ENCODE measurements at regions of chr7 and their contacts with region 1.

Region 1: DNA sequence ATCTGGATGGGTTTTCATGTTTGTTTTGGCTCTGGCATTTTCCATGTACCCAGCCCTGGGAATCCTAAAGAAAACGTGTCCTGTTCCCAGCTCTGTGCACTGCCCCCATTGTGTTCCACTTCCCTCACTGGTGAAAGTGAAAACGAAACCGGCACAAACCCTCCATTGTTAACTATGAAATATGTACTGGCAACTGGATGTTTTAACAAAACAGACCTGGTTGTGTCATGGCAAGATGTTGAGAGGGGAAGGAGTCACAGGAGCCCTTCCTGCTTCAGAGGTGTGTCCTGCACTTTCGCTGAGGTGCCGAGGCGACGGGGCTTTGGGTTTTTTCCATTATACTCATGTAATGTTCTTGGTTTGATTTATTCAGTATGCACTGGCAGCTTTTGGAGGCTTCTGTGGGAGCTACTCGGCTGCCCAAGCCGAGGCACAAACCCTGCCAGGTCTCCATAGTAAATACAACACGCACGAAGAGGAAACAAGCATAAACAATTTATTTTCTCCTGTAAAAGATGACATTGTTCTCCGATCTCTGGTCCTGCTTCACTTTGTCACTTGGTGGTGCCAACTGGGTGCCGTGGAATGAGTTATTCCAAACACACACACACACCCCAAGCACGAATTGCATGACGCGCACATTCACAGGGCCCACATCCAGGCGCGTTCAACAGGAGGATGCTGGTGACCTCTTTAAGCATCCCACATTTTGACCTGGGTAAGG is 118.2 kb downstream of the CDK6 start:
- DNase-seq: peak in 8 of 9 donors; percentile 45 to 73 (median 62)
- ATAC-seq: peak; percentile 91
- H3K4me3 ChIP-seq: peak overlapping the region; percentile 62
- H3K4me3 Mint-ChIP-seq: peak overlapping the region; percentile 84 to 96 (median 94)
- H3K27ac ChIP-seq: peak overlapping the region; percentile 49
- H3K27ac Mint-ChIP-seq: peak overlapping the region; percentile 88 to 99 (median 96)
- H3K4me1 ChIP-seq: peaks cover 10 to 14% of the 10 kb centered on the region in 2 donors
- H3K4me1 Mint-ChIP-seq: peaks cover 26 to 73% (median 40%) of the 10 kb centered on the region in 7 donors
- H3K27me3 ChIP-seq: no peaks in the 10 kb centered on the region
- H3K27me3 Mint-ChIP-seq: no peaks in the 10 kb centered on the region

Region 2: GRCh38 chr7:92020636-92021035 is 697.5 kb before region 1 on chr7:
- CTCF ChIA-PET with region 1: no interaction called
- POLR2A ChIA-PET with region 1: no interaction called
- intact Hi-C with region 1: no loop called
- DNase-seq: no peak
- ATAC-seq: no peak
- H3K4me3 ChIP-seq: no peak overlapping the region
- H3K4me3 Mint-ChIP-seq: no peak overlapping the region
- H3K27ac ChIP-seq: no peak overlapping the region
- H3K27ac Mint-ChIP-seq: peak overlapping the region in 3 of 9 donors; percentile 27 to 37 (median 32)
- H3K4me1 ChIP-seq: no peaks in the 10 kb centered on the region
- H3K4me1 Mint-ChIP-seq: peaks cover 0 to 3% (median 0%) of the 10 kb centered on the region in 7 donors
- H3K27me3 ChIP-seq: no peaks in the 10 kb centered on the region
- H3K27me3 Mint-ChIP-seq: no peaks in the 10 kb centered on the region

Region 3: DNA sequence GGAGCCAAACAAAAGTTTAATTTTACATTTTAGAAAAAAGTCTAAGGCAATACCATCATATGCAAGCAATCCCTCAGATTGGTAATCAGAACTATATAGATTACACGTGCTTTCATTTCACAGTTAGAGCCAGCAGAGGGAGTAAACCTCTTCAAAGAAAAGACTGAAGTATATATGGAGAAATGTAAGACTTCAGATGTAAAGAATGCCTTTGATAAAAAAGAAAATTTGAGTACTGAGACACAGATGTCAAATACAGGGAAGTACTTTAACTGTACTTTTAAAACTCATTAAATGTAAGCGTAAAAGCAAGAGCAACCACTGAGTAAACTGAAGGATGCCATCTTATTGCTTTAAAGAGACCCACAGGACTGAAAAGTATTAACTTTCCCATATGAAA is 26.6 kb before region 1 on chr7:
- CTCF ChIA-PET with region 1: interaction called, 3 read pairs
- POLR2A ChIA-PET with region 1: no interaction called
- intact Hi-C with region 1: loop called (anchors 1 to 2 kb)
- DNase-seq: peak in 7 of 9 donors; percentile 33 to 59 (median 41)
- ATAC-seq: peak; percentile 93
- H3K4me3 ChIP-seq: no peak overlapping the region
- H3K4me3 Mint-ChIP-seq: peak overlapping the region in 4 of 10 donors; percentile 18 to 50 (median 20)
- H3K27ac ChIP-seq: no peak overlapping the region
- H3K27ac Mint-ChIP-seq: peak overlapping the region in 8 of 9 donors; percentile 1 to 75 (median 58)
- H3K4me1 ChIP-seq: peaks cover 12 to 15% of the 10 kb centered on the region in 2 donors
- H3K4me1 Mint-ChIP-seq: peaks cover 7 to 74% (median 38%) of the 10 kb centered on the region in 7 donors
- H3K27me3 ChIP-seq: no peaks in the 10 kb centered on the region
- H3K27me3 Mint-ChIP-seq: no peaks in the 10 kb centered on the region

Region 4: DNA sequence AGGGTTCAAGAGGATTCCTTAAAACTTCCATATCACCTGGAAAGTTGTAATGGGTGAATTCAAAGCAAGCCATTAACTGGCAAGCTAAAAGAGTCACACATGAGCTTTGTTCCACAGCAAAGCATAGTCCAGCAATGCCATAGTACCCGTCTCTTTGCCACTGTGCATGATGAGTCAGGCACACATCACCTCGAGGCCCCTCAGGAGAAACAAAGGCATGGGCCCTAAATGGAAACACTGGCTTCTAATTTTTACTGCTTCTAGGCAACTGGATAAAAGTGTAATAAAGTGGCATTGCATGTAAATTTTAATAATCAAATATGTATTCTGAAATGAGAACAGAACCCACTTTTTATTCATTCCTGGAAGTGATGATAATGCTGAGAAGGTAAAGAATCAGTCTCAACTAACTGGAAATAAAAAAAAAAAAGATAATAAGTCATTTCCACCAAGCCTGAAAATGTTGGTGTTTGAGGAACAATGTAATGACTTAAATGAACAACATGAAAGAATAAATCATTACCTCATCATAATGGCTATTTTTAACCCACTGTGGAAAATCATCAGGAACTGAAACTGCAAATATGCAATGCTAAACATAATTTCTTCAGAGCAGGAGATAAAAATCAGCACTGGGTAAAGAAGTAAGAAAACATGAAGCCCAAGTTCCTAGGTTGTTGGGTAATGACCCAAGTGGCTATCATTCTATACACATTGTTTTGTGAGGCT is 13.3 kb after region 1 on chr7:
- CTCF ChIA-PET with region 1: no interaction called
- POLR2A ChIA-PET with region 1: no interaction called
- intact Hi-C with region 1: loop called in 1 of 2 experiments (anchors 2 kb)
- DNase-seq: peak in 1 of 9 donors; percentile 35
- ATAC-seq: peak; percentile 63
- H3K4me3 ChIP-seq: no peak overlapping the region
- H3K4me3 Mint-ChIP-seq: peak overlapping the region in 1 of 10 donors; percentile 59
- H3K27ac ChIP-seq: no peak overlapping the region
- H3K27ac Mint-ChIP-seq: peak overlapping the region in 1 of 9 donors; percentile 67
- H3K4me1 ChIP-seq: no peaks in the 10 kb centered on the region
- H3K4me1 Mint-ChIP-seq: peaks cover 16 to 60% (median 27%) of the 10 kb centered on the region in 7 donors
- H3K27me3 ChIP-seq: no peaks in the 10 kb centered on the region
- H3K27me3 Mint-ChIP-seq: no peaks in the 10 kb centered on the region

Region 5: GRCh38 chr7:92809397-92810241 is 91.5 kb after region 1 on chr7:
- CTCF ChIA-PET with region 1: no interaction called
- POLR2A ChIA-PET with region 1: no interaction called
- intact Hi-C with region 1: loop called in 1 of 2 experiments (anchors 1 kb)
- DNase-seq: peak in 7 of 9 donors; percentile 27 to 49 (median 41)
- ATAC-seq: peak; percentile 82
- H3K4me3 ChIP-seq: peak overlapping the region; percentile 11
- H3K4me3 Mint-ChIP-seq: peak overlapping the region in 9 of 10 donors; percentile 2 to 70 (median 41)
- H3K27ac ChIP-seq: no peak overlapping the region
- H3K27ac Mint-ChIP-seq: peak overlapping the region in 4 of 9 donors; percentile 27 to 92 (median 55)
- H3K4me1 ChIP-seq: peaks cover 18 to 30% of the 10 kb centered on the region in 2 donors
- H3K4me1 Mint-ChIP-seq: peaks cover 29 to 79% (median 42%) of the 10 kb centered on the region in 7 donors
- H3K27me3 ChIP-seq: no peaks in the 10 kb centered on the region
- H3K27me3 Mint-ChIP-seq: no peaks in the 10 kb centered on the region

Region 6: DNA sequence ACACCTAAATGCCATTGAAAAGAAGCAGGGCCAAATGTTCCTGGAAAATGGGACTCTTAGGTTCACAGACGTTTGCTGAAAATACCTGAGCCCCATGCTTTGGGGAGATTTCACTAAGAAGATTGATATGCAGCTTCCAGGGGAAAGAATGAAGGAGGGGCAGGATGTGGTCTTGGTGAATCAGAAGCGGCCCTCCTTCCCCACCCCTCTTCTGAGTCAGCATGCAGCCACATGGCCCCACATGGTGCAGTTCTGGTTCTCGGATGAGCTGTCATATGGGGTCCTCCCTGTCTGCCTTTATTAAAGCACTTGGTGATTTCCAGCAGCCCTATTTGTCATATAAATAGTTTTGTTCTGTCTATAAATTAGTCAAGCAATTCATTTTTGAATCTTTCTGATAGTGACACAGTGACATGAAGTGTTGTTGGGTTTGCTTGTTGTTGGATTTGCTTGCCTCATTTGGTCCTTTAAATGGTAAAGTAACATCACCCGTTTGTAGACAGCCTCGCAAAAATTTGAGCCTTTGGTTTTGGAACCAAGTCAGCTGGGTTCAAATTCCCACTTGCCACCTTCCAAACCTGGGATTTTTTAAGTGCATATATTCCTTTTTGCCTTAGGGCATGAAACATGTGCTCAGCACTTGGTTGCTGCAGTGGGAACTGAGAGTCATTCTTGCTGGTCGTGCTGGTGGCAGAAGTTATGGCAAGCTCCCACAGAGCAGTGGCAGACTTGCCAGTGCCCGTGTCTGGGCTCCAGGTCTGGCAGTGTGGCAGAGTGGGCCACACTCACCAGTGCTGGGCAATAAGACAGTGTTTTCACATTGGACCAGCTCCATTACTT is 186.4 kb after region 1 on chr7:
- CTCF ChIA-PET with region 1: no interaction called
- POLR2A ChIA-PET with region 1: no interaction called
- intact Hi-C with region 1: loop called in 1 of 2 experiments (anchors 1 kb)
- DNase-seq: peak in 8 of 9 donors; percentile 21 to 80 (median 42)
- ATAC-seq: peak; percentile 99
- H3K4me3 ChIP-seq: no peak overlapping the region
- H3K4me3 Mint-ChIP-seq: peak overlapping the region in 1 of 10 donors; percentile 44
- H3K27ac ChIP-seq: no peak overlapping the region
- H3K27ac Mint-ChIP-seq: peak overlapping the region in 2 of 9 donors; percentile 39 to 83
- H3K4me1 ChIP-seq: peaks cover 0 to 7% of the 10 kb centered on the region in 2 donors
- H3K4me1 Mint-ChIP-seq: peaks cover 0 to 23% (median 12%) of the 10 kb centered on the region in 7 donors
- H3K27me3 ChIP-seq: no peaks in the 10 kb centered on the region
- H3K27me3 Mint-ChIP-seq: peaks cover 0 to 5% (median 0%) of the 10 kb centered on the region in 5 donors